ENCODE measurements at regions of chr19 and their contacts with region 1.

Region 1: DNA sequence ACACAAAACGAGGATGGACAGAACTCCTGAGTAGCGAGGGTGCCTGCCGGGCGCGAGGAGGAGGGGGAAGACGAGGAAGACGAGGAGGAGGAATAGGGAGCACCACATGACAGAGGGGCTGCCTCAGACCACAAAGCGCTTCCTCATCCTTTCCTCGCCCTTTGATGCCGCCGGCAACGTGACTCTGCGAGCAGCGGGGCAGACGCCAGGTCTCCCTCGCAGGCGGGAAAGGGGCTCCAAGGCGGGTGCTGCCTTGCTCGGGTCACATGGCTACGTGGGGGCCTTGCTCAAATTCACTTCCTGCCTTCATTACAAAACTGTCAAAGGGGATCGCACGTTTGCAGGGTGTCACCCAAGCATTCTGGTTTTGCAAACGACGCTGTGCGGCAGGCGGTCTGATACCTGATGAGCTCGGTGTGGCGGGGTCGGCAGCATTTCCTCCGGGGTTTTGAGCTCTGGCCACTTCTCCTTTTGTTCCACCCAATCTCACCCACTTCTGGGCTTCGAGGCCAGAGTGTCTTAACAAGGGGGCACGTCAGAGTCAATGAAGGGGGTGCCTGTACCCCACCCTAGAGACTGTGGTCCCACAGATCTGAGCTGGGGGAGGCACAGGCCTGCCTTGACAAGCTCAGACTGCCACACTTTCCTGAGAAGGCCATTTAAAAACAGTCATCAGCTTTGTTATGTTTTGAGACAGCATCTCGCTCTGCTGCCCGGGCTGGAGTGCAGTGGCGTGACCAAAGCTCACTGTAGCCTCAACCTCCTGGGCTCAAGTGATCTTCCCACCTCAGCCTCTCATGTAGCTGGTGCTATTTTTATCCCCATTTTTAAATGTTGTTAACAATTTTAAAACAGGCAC is 14.9 kb downstream of the MAP2K2 start:
- DNase-seq: no peak
- ATAC-seq: peak; percentile 45
- H3K4me3 ChIP-seq: no peak overlapping the region
- H3K27ac ChIP-seq: no peak overlapping the region
- H3K4me1 ChIP-seq: no peaks in the 10 kb centered on the region
- H3K27me3 ChIP-seq: no peaks in the 10 kb centered on the region
- CTCF ChIP-seq: no peak

Region 2: DNA sequence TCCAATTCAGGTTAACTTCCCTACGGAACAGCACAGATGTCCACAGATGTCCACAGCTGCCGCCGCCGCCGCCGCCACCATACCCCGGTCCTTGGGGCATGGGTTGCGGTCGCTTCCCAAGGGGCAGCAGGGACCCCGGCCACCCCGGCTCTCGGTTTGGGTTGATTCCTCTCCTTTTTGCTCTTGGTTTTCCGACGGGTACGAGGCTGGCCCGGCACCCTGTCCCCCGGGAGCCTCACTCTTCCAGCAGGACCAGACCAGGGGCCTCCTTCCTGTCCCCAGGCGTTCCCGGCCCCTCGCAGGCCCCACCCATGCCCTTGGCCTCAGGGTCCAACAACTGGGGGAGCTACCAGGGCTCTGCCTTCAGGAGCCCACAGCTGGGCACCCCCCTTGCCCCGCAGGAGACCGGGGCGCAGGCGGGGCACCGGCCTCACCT is 70.3 kb before region 1 on chr19:
- intact Hi-C with region 1: loop called (anchors 2 kb)
- DNase-seq: no peak
- ATAC-seq: no peak
- H3K4me3 ChIP-seq: no peak overlapping the region
- H3K27ac ChIP-seq: no peak overlapping the region
- H3K4me1 ChIP-seq: peaks cover 10% of the 10 kb centered on the region
- H3K27me3 ChIP-seq: no peaks in the 10 kb centered on the region
- CTCF ChIP-seq: no peak